Activated CD4-positive, alpha-beta memory T cell treated with anti-CD3 and anti-CD28 coated beads for 36 hours (primary cell): ENCODE measurements at regions of chr20 and their contacts with region 1.

Region 1: GRCh38 chr20:23350196-23350903 is at the start of gene NXT1:
- DNase-seq: peak; percentile 97
- H3K4me3 Mint-ChIP-seq: peak within 1 kb of the TSS; percentile 88
- H3K27ac Mint-ChIP-seq: peak within 1 kb of the TSS; percentile 100
- H3K4me1 Mint-ChIP-seq: peaks cover 26% of the 10 kb centered on the region
- H3K27me3 Mint-ChIP-seq: no peaks in the 10 kb centered on the region
- total RNA-seq, gene NXT1: 39.0 to 39.3 TPM

Region 2: DNA sequence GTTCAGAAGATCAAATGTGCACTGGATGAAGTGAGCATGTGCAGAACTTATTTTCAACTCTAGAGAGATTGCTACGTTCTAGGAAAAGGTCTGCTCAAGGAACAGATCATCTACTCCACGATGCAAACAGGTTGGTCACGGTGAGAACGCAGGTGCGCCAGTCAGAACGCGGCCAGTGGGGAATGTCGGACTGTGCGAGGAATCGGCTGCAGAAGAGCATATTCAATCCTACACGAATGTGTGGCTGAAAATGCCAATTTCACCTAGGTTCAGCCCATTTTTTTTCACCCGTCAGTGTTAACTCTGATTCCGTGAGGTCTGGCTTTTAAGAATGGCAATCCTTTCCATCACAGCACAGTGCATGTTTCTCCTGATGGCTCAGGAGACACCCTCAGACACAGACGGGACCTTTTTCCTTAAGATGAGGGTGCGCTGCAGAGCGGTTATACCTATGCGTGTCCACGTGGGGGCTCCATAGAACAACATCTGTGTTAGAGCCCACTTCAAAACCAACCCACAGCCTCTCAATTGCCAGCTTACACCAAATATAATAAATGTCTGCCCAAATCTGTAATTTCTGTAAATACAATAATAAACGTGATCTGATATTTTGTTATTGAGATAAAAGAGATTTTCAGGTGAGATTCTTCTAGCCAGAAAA is 1016.3 kb before region 1 on chr20:
- CTCF ChIA-PET with region 1: no interaction called
- POLR2A ChIA-PET with region 1: no interaction called
- intact Hi-C with region 1: loop called (anchors 10 kb)
- DNase-seq: peak; percentile 40
- H3K4me3 Mint-ChIP-seq: no peak overlapping the region
- H3K27ac Mint-ChIP-seq: no peak overlapping the region
- H3K4me1 Mint-ChIP-seq: no peaks in the 10 kb centered on the region
- H3K27me3 Mint-ChIP-seq: no peaks in the 10 kb centered on the region

Region 3: DNA sequence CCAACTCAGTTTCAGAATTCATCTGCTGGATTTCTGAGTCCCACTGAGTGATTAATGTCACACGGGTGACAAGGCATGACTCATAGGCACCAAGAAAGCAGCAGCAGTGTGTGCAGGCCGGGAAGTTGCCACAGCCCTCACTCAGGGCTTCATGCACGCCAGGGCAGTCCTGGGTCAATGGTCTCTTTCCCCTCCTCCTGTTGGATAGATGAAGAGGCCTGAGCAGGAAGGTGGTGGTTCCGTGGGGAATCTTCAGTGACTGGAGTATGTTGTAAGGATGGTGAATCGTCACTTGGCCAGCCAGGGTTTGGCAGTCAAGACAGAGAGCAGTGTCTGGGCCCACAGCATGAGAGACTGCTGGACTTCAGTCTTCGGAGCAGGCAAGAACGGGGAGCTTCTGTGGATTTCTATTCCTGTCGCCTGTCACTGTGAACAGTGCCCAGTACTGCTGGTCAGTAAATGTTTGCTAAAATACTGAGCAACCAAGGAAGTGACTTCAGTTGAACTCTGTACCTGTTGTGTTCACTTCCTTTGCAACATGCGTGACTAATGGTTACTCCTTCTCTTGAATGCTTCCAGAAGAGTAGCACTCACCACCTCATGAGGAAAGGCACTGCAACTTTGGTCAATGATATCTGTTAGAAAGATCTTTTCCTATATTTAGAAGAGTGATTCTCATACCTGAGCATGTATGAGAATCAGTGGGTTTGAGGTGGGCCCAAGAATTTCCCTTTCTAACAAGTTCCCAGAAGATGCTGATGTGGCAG is 202.2 kb before region 1 on chr20:
- CTCF ChIA-PET with region 1: no interaction called
- POLR2A ChIA-PET with region 1: no interaction called
- intact Hi-C with region 1: loop called (anchors 5 kb)
- DNase-seq: peak; percentile 69
- H3K4me3 Mint-ChIP-seq: no peak overlapping the region
- H3K27ac Mint-ChIP-seq: peak overlapping the region; percentile 83
- H3K4me1 Mint-ChIP-seq: peaks cover 12% of the 10 kb centered on the region
- H3K27me3 Mint-ChIP-seq: peaks cover 5% of the 10 kb centered on the region

Region 4: DNA sequence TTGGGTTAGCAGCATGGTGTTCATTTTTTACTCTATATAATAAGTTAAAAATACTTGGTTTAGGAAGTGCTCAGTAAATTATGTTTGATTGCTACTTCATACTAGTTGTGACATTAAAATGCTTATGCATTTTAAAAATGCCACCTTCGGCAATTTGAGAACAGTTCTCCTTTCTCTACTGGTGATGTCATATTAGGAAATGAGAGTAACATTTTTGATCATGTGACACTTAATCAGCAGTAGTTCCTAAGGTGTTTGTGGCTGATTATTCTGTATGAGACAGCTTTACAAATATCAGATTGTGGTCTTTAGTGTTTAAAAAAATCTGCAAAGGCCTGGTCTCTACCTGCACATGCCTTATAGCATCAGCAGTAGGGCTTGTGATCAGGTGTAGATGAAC is 16.0 kb after region 1 on chr20:
- CTCF ChIA-PET with region 1: interaction called, 8 read pairs
- POLR2A ChIA-PET with region 1: interaction called, 31 read pairs
- intact Hi-C with region 1: loop called (anchors 1 kb)
- DNase-seq: no peak
- H3K4me3 Mint-ChIP-seq: no peak overlapping the region
- H3K27ac Mint-ChIP-seq: peak overlapping the region; percentile 81
- H3K4me1 Mint-ChIP-seq: peaks cover 50% of the 10 kb centered on the region
- H3K27me3 Mint-ChIP-seq: peaks cover 2% of the 10 kb centered on the region

Region 5: GRCh38 chr20:23399568-23400241 is 49.4 kb after region 1 on chr20:
- CTCF ChIA-PET with region 1: interaction called, 6 read pairs
- POLR2A ChIA-PET with region 1: interaction called, 7 read pairs
- intact Hi-C with region 1: loop called (anchors 1 kb)
- DNase-seq: peak; percentile 27
- H3K4me3 Mint-ChIP-seq: no peak overlapping the region
- H3K27ac Mint-ChIP-seq: no peak overlapping the region
- H3K4me1 Mint-ChIP-seq: peaks cover 31% of the 10 kb centered on the region
- H3K27me3 Mint-ChIP-seq: no peaks in the 10 kb centered on the region

Region 6: GRCh38 chr20:25247956-25248785 is 1897.8 kb after region 1 on chr20 and contains the start of gene PYGB:
- CTCF ChIA-PET with region 1: no interaction called
- POLR2A ChIA-PET with region 1: no interaction called
- intact Hi-C with region 1: loop called (anchors 10 kb)
- DNase-seq: peak; percentile 81
- H3K4me3 Mint-ChIP-seq: peak within 1 kb of the TSS; percentile 91
- H3K27ac Mint-ChIP-seq: peak within 1 kb of the TSS; percentile 88
- H3K4me1 Mint-ChIP-seq: peaks cover 50% of the 10 kb centered on the region
- H3K27me3 Mint-ChIP-seq: no peaks in the 10 kb centered on the region
- total RNA-seq, gene PYGB: 23.4 to 24.0 TPM